Activated CD4-positive, alpha-beta T cell treated with anti-CD3 and anti-CD28 coated beads for 36 hours (primary cell): ENCODE measurements at regions of chr2 and their contacts with region 1.

Region 1: GRCh38 chr2:102020596-102021181 is 28.9 kb downstream of the IL1R2 start:
- DNase-seq: peak; percentile 92
- ATAC-seq: peak; percentile 84
- H3K4me3 Mint-ChIP-seq: no peak overlapping the region
- H3K27ac Mint-ChIP-seq: peak overlapping the region; percentile 68
- H3K4me1 Mint-ChIP-seq: peaks cover 53% of the 10 kb centered on the region
- H3K27me3 Mint-ChIP-seq: peaks cover 2% of the 10 kb centered on the region

Region 2: GRCh38 chr2:100909534-100910081 is 1111.1 kb before region 1 on chr2:
- CTCF ChIA-PET with region 1: no interaction called
- POLR2A ChIA-PET with region 1: no interaction called
- intact Hi-C with region 1: no loop called
- DNase-seq: no peak
- ATAC-seq: no peak
- H3K4me3 Mint-ChIP-seq: no peak overlapping the region
- H3K27ac Mint-ChIP-seq: no peak overlapping the region
- H3K4me1 Mint-ChIP-seq: peaks cover 8% of the 10 kb centered on the region
- H3K27me3 Mint-ChIP-seq: peaks cover 1% of the 10 kb centered on the region

Region 3: DNA sequence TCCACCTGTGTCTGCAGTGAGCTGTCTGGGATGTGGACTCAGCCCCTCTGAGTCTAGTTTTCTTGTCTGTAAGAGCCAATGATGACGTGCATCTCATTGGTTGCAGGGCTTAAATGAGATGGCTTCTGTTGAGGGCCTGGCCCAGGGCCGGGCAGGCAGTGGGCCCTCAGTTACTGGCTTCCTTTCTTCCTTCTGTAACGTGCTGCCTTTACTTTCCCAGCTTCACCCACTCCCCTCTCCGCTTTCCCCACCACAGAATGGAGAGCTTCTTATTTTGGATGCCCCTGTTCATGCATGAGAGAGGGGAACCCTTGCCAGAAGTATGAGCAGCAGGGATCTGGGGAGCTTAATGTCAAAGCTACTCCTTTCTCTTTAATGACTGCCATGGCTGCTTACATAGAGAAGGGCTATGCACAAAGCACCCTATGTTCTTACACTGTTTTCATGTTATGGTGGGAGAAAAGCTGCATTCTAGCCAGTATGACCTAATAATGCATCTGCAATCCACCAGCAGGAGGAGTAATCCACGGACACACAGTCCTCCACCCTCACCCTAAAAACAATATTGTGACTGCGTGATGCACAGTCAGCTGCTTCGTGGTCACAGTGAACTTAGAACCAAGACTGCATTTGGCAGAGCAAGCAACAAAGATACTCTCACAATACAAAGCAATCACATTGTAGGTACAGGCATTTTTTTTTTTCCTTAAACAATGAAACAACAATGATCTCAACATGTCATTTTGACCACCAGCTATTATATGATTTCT is 670.6 kb before region 1 on chr2:
- CTCF ChIA-PET with region 1: no interaction called
- POLR2A ChIA-PET with region 1: no interaction called
- intact Hi-C with region 1: no loop called
- DNase-seq: no peak
- ATAC-seq: no peak
- H3K4me3 Mint-ChIP-seq: no peak overlapping the region
- H3K27ac Mint-ChIP-seq: no peak overlapping the region
- H3K4me1 Mint-ChIP-seq: peaks cover 5% of the 10 kb centered on the region
- H3K27me3 Mint-ChIP-seq: no peaks in the 10 kb centered on the region

Region 4: DNA sequence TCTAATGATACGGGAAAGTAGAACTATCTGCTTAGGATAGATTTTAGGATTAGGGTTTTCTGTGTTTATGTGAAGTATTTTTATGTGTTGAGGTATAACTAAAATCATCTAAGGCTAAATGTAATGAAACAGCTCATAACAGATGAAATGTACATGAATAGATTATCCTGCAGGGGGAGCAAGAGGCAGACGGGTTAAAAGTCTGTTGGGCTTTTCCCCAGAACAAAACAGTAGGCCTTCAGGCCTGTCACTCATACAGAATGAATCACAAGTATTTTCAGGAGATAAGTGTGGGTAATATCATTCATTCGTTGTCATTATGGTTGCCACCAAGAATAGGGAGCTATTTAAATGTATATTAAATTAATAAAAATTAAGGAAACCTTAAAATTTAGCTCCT is 136.8 kb before region 1 on chr2:
- CTCF ChIA-PET with region 1: interaction called, 22 read pairs
- POLR2A ChIA-PET with region 1: no interaction called
- intact Hi-C with region 1: loop called in 1 of 2 experiments (anchors 5 kb)
- DNase-seq: peak; percentile 67
- ATAC-seq: peak; percentile 90
- H3K4me3 Mint-ChIP-seq: no peak overlapping the region
- H3K27ac Mint-ChIP-seq: peak overlapping the region; percentile 12
- H3K4me1 Mint-ChIP-seq: peaks cover 18% of the 10 kb centered on the region
- H3K27me3 Mint-ChIP-seq: no peaks in the 10 kb centered on the region

Region 5: DNA sequence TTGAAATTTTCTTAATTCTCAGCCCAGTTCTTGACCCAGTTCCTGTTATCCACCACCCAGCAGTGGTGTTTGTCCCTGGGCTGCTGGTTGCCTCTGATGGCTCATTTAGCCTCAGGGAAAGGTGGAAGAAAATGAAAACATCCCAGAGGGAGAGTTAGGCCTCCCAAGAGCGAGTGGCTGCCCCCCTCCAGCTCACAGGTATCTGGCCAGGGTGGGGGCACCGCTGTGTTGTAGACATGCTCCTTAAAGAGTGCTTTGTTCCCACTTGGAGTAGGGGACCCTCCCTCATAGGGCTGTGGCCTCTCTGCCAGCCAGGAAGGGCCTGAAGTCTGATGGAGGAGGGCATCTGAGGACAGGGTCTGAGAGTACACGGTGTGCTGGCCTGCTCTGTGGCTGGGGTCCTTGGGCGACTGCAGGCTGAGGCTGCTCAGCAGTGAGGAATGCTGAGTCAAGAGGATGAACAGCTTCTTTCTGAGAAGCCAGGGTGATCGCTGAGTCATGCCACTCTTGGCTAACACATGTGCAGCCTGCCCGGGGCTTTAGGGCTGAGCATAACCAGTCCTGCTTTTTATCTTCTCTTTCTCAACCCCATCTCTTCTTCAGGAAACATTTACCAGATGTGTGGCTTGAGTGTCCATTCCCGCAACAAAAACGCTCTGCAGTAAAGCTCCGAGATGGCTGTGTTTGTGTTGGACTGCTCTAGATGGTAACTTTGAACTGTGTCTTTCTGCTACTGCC is 43.4 kb after region 1 on chr2:
- CTCF ChIA-PET with region 1: interaction called, 5 read pairs
- POLR2A ChIA-PET with region 1: no interaction called
- intact Hi-C with region 1: loop called (anchors 2 kb)
- DNase-seq: peak; percentile 77
- ATAC-seq: peak; percentile 35
- H3K4me3 Mint-ChIP-seq: no peak overlapping the region
- H3K27ac Mint-ChIP-seq: peak overlapping the region; percentile 86
- H3K4me1 Mint-ChIP-seq: peaks cover 38% of the 10 kb centered on the region
- H3K27me3 Mint-ChIP-seq: no peaks in the 10 kb centered on the region

Region 6: GRCh38 chr2:102103992-102104871 is 83.5 kb after region 1 on chr2:
- CTCF ChIA-PET with region 1: interaction called, 6 read pairs
- POLR2A ChIA-PET with region 1: no interaction called
- intact Hi-C with region 1: loop called (anchors 5 kb)
- DNase-seq: peak; percentile 92
- ATAC-seq: peak; percentile 78
- H3K4me3 Mint-ChIP-seq: peak overlapping the region; percentile 80
- H3K27ac Mint-ChIP-seq: peak overlapping the region; percentile 84
- H3K4me1 Mint-ChIP-seq: peaks cover 59% of the 10 kb centered on the region
- H3K27me3 Mint-ChIP-seq: peaks cover 11% of the 10 kb centered on the region

Region 7: GRCh38 chr2:102147935-102148334 is 127.2 kb after region 1 on chr2:
- CTCF ChIA-PET with region 1: no interaction called
- POLR2A ChIA-PET with region 1: no interaction called
- intact Hi-C with region 1: no loop called
- DNase-seq: peak; percentile 81
- ATAC-seq: peak; percentile 87
- H3K4me3 Mint-ChIP-seq: no peak overlapping the region
- H3K27ac Mint-ChIP-seq: peak overlapping the region; percentile 89
- H3K4me1 Mint-ChIP-seq: peaks cover 26% of the 10 kb centered on the region
- H3K27me3 Mint-ChIP-seq: peaks cover 7% of the 10 kb centered on the region

Region 8: GRCh38 chr2:102235491-102235890 is 214.8 kb after region 1 on chr2:
- CTCF ChIA-PET with region 1: interaction called, 71 read pairs
- POLR2A ChIA-PET with region 1: no interaction called
- intact Hi-C with region 1: loop called in 1 of 2 experiments (anchors 1 kb)
- DNase-seq: peak; percentile 54
- ATAC-seq: no peak
- H3K4me3 Mint-ChIP-seq: no peak overlapping the region
- H3K27ac Mint-ChIP-seq: peak overlapping the region; percentile 12
- H3K4me1 Mint-ChIP-seq: peaks cover 65% of the 10 kb centered on the region
- H3K27me3 Mint-ChIP-seq: no peaks in the 10 kb centered on the region

Region 9: DNA sequence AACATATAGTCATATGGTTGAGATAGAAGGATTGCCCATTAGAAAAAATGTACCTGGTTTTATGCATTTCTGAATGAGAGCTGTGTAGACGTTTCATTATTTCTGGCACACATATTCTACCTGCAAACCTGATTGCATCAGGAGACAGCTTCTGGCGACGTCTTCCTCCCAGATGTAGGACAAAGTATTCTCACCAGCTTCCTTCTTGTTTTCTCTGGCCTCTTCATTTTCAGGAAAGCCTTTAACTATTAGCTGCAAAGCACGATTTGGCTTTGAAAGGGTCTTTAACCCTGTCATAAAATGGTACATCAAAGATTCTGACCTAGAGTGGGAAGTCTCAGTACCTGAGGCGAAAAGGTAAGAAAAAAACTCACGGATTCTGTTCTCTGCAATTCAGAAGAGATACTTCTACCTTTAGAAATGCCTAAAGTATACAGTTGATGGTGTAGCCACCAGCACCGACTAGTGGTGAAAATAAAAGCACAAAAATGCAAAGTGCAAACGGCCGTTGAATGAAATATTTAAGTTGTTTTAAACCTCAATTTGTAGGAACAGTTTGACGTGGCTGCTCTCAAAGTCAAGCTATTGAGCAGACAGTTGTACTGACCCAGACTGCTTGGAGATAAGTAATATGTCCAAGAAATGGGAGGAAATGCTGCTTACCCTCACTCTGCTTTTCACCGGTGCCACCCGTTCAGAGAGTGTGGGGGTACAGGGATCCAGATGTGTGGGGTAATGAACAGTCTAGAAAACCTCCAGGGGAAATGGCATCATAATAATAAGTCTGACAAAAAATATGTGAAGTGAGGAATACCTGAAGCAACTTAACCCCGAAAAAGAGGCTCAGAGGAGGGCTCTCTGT is 422.5 kb after region 1 on chr2:
- CTCF ChIA-PET with region 1: interaction called, 12 read pairs
- POLR2A ChIA-PET with region 1: no interaction called
- intact Hi-C with region 1: loop called (anchors 1 kb)
- DNase-seq: peak; percentile 65
- ATAC-seq: peak; percentile 84
- H3K4me3 Mint-ChIP-seq: no peak overlapping the region
- H3K27ac Mint-ChIP-seq: peak overlapping the region; percentile 56
- H3K4me1 Mint-ChIP-seq: peaks cover 11% of the 10 kb centered on the region
- H3K27me3 Mint-ChIP-seq: no peaks in the 10 kb centered on the region